ENCODE measurements at regions of chr20 and their contacts with region 1.

Region 1: DNA sequence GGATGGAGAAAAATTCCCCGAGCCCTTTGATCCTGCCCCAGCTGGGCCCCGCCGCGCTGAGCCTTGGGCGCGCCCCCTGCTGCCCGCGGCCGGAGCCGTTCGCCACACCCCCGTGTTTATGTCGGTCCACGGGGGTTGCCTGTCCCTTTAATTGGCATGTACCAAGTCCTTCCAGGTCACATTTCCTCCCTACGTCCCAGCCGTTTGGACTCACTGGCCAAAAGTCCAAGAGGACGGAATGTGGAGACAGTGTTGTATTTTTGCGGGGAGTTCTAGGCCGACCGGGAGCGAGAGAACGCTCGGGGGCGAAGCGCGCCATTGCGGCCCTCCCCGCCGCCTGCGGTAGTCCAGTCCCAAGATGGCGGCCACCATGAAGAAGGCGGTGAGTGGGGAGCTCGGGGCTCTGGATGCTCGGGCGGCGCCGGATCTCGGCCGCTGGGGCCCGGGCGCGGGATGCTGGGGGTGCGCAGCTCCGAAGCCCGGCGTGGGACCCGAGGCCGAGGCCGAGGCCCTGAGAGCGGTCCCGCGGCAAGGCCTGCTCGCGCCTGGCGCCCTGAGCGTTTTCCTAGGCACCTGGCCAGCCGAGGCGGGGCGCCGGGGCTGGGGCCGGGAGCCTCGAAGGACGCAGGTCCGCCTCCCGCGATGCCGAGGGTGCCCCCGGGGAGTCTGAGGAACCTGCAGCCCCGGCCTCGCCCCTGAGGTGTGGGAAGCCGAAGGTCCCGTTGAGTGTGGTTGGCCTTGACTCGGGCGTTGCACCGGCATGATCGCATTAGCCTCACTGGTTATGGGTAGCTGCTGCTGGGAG is at the start of gene PFDN4:
- DNase-seq: peak; percentile 90
- H3K4me3 ChIP-seq: peak within 1 kb of the TSS; percentile 74 to 88 (median 76)
- H3K27ac ChIP-seq: peak within 1 kb of the TSS; percentile 97
- H3K4me1 ChIP-seq: peaks cover 9% of the 10 kb centered on the region
- H3K27me3 ChIP-seq: no peaks in the 10 kb centered on the region
- CTCF ChIP-seq: peak; percentile 88 to 96
- POLR2A ChIP-seq: peak; percentile 67
- total RNA-seq, gene PFDN4: 37.9 and 44.2 TPM in 2 replicates

Region 2: GRCh38 chr20:54103067-54103761 is 104.7 kb before region 1 on chr20:
- CTCF ChIA-PET with region 1: interaction called, 116 read pairs
- POLR2A ChIA-PET with region 1: no interaction called
- dilution Hi-C with region 1: no loop called
- intact Hi-C with region 1: no loop called
- DNase-seq: peak; percentile 49
- H3K4me3 ChIP-seq: no peak overlapping the region
- H3K27ac ChIP-seq: no peak overlapping the region
- H3K4me1 ChIP-seq: no peaks in the 10 kb centered on the region
- H3K27me3 ChIP-seq: peaks cover 0 to 3% of the 10 kb centered on the region in 2 experiments
- CTCF ChIP-seq: peak; percentile 88 to 90
- POLR2A ChIP-seq: no peak

Region 3: DNA sequence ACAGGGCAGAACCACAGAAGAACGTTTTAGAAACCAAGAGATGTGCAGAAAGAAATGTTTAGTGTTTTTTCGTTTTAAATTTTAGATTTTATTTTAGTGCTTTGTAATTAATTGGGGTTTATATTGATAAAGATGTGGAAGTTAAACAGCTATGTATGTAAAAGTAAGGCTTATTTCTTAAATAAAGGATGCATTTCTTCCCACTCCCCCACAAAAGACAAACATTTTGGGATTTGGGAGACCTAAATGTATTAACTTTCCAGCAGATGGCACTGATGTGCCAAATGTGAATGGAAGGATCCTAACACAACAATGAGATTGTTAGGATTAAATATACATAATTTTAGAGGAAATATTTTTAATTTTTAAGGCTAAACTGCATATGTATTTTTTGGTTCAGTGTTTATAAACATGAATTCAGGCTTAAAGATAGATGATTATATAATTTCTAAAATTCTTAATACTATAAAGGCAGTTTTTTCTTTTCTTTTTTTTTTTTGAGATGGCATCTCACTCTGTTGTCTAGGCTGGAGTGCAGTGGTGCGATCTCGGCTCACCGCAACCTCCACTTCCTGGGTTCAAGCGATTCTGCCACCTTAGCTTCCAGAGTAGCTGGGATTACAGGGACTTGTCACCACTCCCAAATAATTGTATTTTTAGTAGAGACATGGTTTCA is 11.9 kb after region 1 on chr20:
- CTCF ChIA-PET with region 1: interaction called, 9 read pairs
- POLR2A ChIA-PET with region 1: no interaction called
- dilution Hi-C with region 1: no loop called
- intact Hi-C with region 1: loop called (anchors 1 kb)
- DNase-seq: peak; percentile 56
- H3K4me3 ChIP-seq: no peak overlapping the region
- H3K27ac ChIP-seq: no peak overlapping the region
- H3K4me1 ChIP-seq: peaks cover 11% of the 10 kb centered on the region
- H3K27me3 ChIP-seq: no peaks in the 10 kb centered on the region
- CTCF ChIP-seq: peak; percentile 30 to 33
- POLR2A ChIP-seq: no peak

Region 4: GRCh38 chr20:54475334-54476168 is 267.6 kb after region 1 on chr20 and contains the start of gene DOK5:
- CTCF ChIA-PET with region 1: no interaction called
- POLR2A ChIA-PET with region 1: no interaction called
- dilution Hi-C with region 1: no loop called
- intact Hi-C with region 1: loop called (anchors 5 kb)
- DNase-seq: peak; percentile 29
- H3K4me3 ChIP-seq: peak within 1 kb of the TSS; percentile 51 to 75 (median 62)
- H3K27ac ChIP-seq: no peak within 1 kb of the TSS
- H3K4me1 ChIP-seq: peaks cover 9% of the 10 kb centered on the region
- H3K27me3 ChIP-seq: peaks cover 4 to 17% of the 10 kb centered on the region in 2 experiments
- CTCF ChIP-seq: no peak
- POLR2A ChIP-seq: no peak
- total RNA-seq, gene DOK5: 5.7 and 14.2 TPM in 2 replicates